Sigmoid colon (tissue), 7 donors: ENCODE measurements at regions of chr4 and their contacts with region 1.

Region 1: GRCh38 chr4:185730387-185730786 is 81.6 kb downstream of the SORBS2 start:
- DNase-seq: no peak
- H3K4me3 ChIP-seq: no peak overlapping the region
- H3K27ac ChIP-seq: peak overlapping the region; percentile 81 to 88 (median 84)
- H3K4me1 ChIP-seq: peaks cover 0 to 75% (median 55%) of the 10 kb centered on the region in 4 donors
- H3K27me3 ChIP-seq: no peaks in the 10 kb centered on the region
- CTCF ChIP-seq: no peak
- EP300 ChIP-seq: no peak
- POLR2A ChIP-seq: no peak

Region 2: DNA sequence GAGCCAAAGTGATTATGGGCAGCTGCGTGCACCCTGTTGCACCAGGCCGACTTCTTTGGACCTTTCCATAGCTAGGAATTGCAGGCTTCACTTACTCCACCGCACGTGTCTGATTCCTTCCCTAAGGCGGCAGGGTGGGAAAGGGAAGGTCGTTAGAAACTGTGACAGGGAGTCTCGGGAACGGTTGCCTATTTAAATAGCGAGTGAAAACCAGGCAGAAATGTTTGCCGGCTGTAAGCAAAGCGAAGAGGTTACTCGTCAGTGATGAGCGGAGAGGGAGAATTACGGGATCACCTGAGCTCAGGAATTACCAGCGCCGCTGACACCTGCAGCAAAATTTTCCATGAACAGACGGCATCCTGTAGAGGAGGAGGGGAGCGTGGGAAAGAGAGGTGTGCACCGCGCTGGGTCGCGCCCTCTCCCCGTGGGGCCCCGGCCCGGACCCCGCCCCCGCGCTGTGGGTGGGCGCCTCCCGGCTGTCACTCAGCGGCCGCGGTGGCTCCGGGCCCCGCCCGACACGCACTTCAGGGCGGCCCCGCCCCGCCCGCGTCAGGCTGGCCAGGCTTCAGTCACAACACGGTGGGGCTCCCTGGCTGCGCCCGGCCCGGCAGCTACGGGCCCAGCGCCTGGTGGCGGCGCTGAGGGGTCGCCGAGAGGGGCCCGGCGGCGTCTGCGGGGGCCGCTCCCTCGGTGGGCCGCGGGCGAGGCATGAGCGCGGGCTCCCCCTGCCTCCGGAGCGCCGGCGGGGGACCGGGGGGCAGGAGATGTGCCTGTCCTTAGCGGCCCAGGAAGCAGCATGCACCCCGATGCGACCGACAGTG is 521.1 kb before region 1 on chr4 and contains the start of gene SNX25:
- intact Hi-C with region 1: loop called (anchors 10 kb)
- DNase-seq: peak; percentile 92
- H3K4me3 ChIP-seq: peak within 1 kb of the TSS; percentile 45 to 90 (median 89)
- H3K27ac ChIP-seq: peak within 1 kb of the TSS; percentile 86 to 98 (median 90)
- H3K4me1 ChIP-seq: peaks cover 0 to 43% (median 28%) of the 10 kb centered on the region in 4 donors
- H3K27me3 ChIP-seq: no peaks in the 10 kb centered on the region
- CTCF ChIP-seq: no peak
- EP300 ChIP-seq: no peak
- POLR2A ChIP-seq: no peak
- total RNA-seq, gene SNX25: 22.7 to 40.5 (median 38.4) TPM

Region 3: GRCh38 chr4:185648631-185649030 is 81.8 kb before region 1 on chr4:
- intact Hi-C with region 1: no loop called
- DNase-seq: no peak
- H3K4me3 ChIP-seq: no peak overlapping the region
- H3K27ac ChIP-seq: peak overlapping the region in 3 of 4 donors; percentile 83 to 88 (median 87)
- H3K4me1 ChIP-seq: peaks cover 0 to 56% (median 53%) of the 10 kb centered on the region in 4 donors
- H3K27me3 ChIP-seq: no peaks in the 10 kb centered on the region
- CTCF ChIP-seq: no peak
- EP300 ChIP-seq: no peak
- POLR2A ChIP-seq: no peak